ENCODE measurements at regions of chr6 and their contacts with region 1.

Region 1: DNA sequence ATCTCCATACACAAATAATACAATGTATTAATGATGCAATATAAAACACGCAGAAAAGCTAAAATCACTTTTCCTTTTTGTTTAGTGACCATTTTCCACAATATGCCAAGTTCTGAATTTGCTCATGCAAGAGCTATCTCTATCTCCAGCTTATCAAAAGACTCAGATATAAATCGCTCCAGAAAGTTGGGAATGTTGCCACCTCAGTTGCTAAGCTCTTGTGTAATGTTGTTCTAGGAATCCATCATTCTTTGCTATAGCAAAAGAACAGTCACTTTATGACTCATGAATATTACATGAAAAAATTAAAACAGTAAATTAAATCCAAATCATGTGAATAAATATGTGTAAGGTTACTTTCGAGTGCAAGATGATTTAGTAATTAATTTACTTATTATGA is 8.7 kb downstream of the PLAGL1 start:
- DNase-seq: peak in 1 of 2 experiments; percentile 38
- H3K4me3 ChIP-seq: no peak overlapping the region
- H3K27ac ChIP-seq: no peak overlapping the region
- H3K4me1 ChIP-seq: no peaks in the 10 kb centered on the region
- H3K27me3 ChIP-seq: no peaks in the 10 kb centered on the region
- CTCF ChIP-seq: no peak

Region 2: DNA sequence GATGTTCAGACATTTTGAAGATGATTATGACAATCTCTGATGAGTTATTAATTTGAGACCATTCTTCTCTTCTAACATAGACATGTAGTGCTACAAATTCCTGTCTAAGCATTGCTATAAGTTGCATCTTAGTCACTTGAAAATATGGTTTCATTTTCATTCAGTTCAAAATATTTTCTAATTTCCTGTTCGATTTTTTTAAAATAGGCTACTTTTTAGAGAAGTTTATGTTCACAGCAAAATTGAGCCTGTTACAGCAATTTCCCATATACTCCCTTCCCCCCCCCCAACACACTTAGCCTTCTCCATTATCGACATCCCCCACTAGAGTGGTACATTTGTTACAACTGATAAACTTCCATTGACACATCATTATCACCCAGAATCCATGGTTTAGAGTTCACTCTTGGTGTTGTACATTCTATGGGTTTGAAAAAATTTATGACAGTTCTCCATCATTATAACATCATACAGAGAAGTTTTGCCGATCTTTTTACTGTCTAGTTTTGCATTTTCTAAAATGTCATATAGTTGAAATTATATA is 22.5 kb before region 1 on chr6:
- CTCF ChIA-PET with region 1: interaction called, 16 read pairs
- POLR2A ChIA-PET with region 1: no interaction called
- intact Hi-C with region 1: no loop called
- DNase-seq: no peak
- H3K4me3 ChIP-seq: no peak overlapping the region
- H3K27ac ChIP-seq: no peak overlapping the region
- H3K4me1 ChIP-seq: no peaks in the 10 kb centered on the region
- H3K27me3 ChIP-seq: no peaks in the 10 kb centered on the region
- CTCF ChIP-seq: no peak